PC-3 (cell line): ENCODE measurements at regions of chr12 and their contacts with region 1.

Region 1: GRCh38 chr12:58413794-58414193 is 472.4 kb downstream of the ATP23 start:
- DNase-seq: peak; percentile 93
- ATAC-seq: peak; percentile 84
- H3K4me3 ChIP-seq: peak overlapping the region; percentile 56
- H3K27ac ChIP-seq: peak overlapping the region; percentile 98
- H3K4me1 ChIP-seq: peaks cover 47% of the 10 kb centered on the region
- H3K27me3 ChIP-seq: no peaks in the 10 kb centered on the region
- CTCF ChIP-seq: no peak

Region 2: GRCh38 chr12:57918147-57918546 is 495.6 kb before region 1 on chr12:
- CTCF ChIA-PET with region 1: no interaction called
- POLR2A ChIA-PET with region 1: no interaction called
- intact Hi-C with region 1: no loop called
- DNase-seq: no peak
- ATAC-seq: no peak
- H3K4me3 ChIP-seq: no peak overlapping the region
- H3K27ac ChIP-seq: no peak overlapping the region
- H3K4me1 ChIP-seq: no peaks in the 10 kb centered on the region
- H3K27me3 ChIP-seq: no peaks in the 10 kb centered on the region
- CTCF ChIP-seq: no peak

Region 3: DNA sequence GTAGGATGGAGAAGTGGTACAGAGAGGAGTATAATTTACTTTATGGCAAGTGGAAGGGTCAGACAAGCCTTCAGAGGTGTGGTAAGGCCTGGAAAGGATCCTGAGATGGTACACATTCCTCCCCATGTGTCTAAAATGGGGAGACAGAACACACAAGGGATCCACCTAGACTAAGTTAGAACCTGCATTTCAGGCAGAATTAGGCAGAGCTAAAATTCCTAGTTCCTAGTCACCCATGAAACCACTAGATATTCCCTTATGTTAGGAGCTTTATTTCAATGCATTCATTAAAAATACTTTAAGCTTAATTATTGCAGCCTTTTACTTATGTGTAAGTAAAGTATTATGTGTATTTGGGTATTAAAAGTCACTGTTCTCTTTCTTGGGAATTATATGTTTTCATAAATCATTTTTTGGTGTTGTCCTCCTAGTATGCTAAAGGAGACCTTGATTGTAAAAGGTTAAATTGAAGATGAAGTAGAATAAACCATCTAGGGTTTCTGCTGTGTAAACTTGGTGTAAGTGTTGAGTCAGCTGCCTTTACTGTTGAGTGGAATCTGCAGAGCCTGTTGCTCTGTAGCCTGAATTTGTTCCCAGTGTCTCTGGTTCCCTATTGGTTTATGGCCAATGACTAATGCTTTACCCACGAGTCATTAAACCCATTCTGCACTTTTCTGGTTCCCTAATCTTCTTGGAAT is 49.3 kb before region 1 on chr12:
- CTCF ChIA-PET with region 1: no interaction called
- POLR2A ChIA-PET with region 1: no interaction called
- intact Hi-C with region 1: loop called (anchors 1 kb)
- DNase-seq: peak; percentile 98
- ATAC-seq: peak; percentile 97
- H3K4me3 ChIP-seq: peak overlapping the region; percentile 21; the same call in 1 of the 2 replicates
- H3K27ac ChIP-seq: peak overlapping the region; percentile 91
- H3K4me1 ChIP-seq: peaks cover 59% of the 10 kb centered on the region
- H3K27me3 ChIP-seq: no peaks in the 10 kb centered on the region
- CTCF ChIP-seq: no peak

Region 4: GRCh38 chr12:58425481-58426392 is 11.9 kb after region 1 on chr12:
- CTCF ChIA-PET with region 1: no interaction called
- POLR2A ChIA-PET with region 1: interaction called, 13 read pairs
- intact Hi-C with region 1: loop called (anchors 1 kb)
- DNase-seq: peak; percentile 95
- ATAC-seq: peak; percentile 87
- H3K4me3 ChIP-seq: peak overlapping the region; percentile 51
- H3K27ac ChIP-seq: peak overlapping the region; percentile 99
- H3K4me1 ChIP-seq: peaks cover 42% of the 10 kb centered on the region
- H3K27me3 ChIP-seq: no peaks in the 10 kb centered on the region
- CTCF ChIP-seq: no peak